Activated CD4-positive, alpha-beta memory T cell treated with anti-CD3 and anti-CD28 coated beads for 36 hours (primary cell): ENCODE measurements at regions of chr9 and their contacts with region 1.

Region 1: GRCh38 chr9:7976167-7976755 is 176.7 kb upstream of the DMAC1 start:
- DNase-seq: peak; percentile 64
- H3K4me3 Mint-ChIP-seq: peak overlapping the region; percentile 26
- H3K27ac Mint-ChIP-seq: peak overlapping the region; percentile 84
- H3K4me1 Mint-ChIP-seq: peaks cover 63% of the 10 kb centered on the region
- H3K27me3 Mint-ChIP-seq: no peaks in the 10 kb centered on the region

Region 2: GRCh38 chr9:6997330-6997729 is 978.9 kb before region 1 on chr9:
- CTCF ChIA-PET with region 1: no interaction called
- POLR2A ChIA-PET with region 1: no interaction called
- intact Hi-C with region 1: no loop called
- DNase-seq: no peak
- H3K4me3 Mint-ChIP-seq: no peak overlapping the region
- H3K27ac Mint-ChIP-seq: no peak overlapping the region
- H3K4me1 Mint-ChIP-seq: no peaks in the 10 kb centered on the region
- H3K27me3 Mint-ChIP-seq: no peaks in the 10 kb centered on the region

Region 3: GRCh38 chr9:7756088-7756487 is 220.2 kb before region 1 on chr9:
- CTCF ChIA-PET with region 1: no interaction called
- POLR2A ChIA-PET with region 1: no interaction called
- intact Hi-C with region 1: loop called (anchors 2 kb)
- DNase-seq: peak; percentile 15
- H3K4me3 Mint-ChIP-seq: no peak overlapping the region
- H3K27ac Mint-ChIP-seq: peak overlapping the region; percentile 50
- H3K4me1 Mint-ChIP-seq: peaks cover 12% of the 10 kb centered on the region
- H3K27me3 Mint-ChIP-seq: no peaks in the 10 kb centered on the region

Region 4: GRCh38 chr9:7879551-7880245 is 96.6 kb before region 1 on chr9:
- CTCF ChIA-PET with region 1: no interaction called
- POLR2A ChIA-PET with region 1: no interaction called
- intact Hi-C with region 1: loop called (anchors 1 kb)
- DNase-seq: peak; percentile 69
- H3K4me3 Mint-ChIP-seq: no peak overlapping the region
- H3K27ac Mint-ChIP-seq: no peak overlapping the region
- H3K4me1 Mint-ChIP-seq: peaks cover 7% of the 10 kb centered on the region
- H3K27me3 Mint-ChIP-seq: peaks cover 2% of the 10 kb centered on the region

Region 5: GRCh38 chr9:7988644-7989280 is 12.5 kb after region 1 on chr9:
- CTCF ChIA-PET with region 1: no interaction called
- POLR2A ChIA-PET with region 1: no interaction called
- intact Hi-C with region 1: loop called (anchors 1 kb)
- DNase-seq: no peak
- H3K4me3 Mint-ChIP-seq: no peak overlapping the region
- H3K27ac Mint-ChIP-seq: no peak overlapping the region
- H3K4me1 Mint-ChIP-seq: peaks cover 6% of the 10 kb centered on the region
- H3K27me3 Mint-ChIP-seq: peaks cover 3% of the 10 kb centered on the region

Region 6: GRCh38 chr9:8188720-8189407 is 212.6 kb after region 1 on chr9:
- CTCF ChIA-PET with region 1: no interaction called
- POLR2A ChIA-PET with region 1: interaction called, 3 read pairs
- intact Hi-C with region 1: loop called (anchors 2 kb)
- DNase-seq: peak; percentile 51
- H3K4me3 Mint-ChIP-seq: no peak overlapping the region
- H3K27ac Mint-ChIP-seq: no peak overlapping the region
- H3K4me1 Mint-ChIP-seq: peaks cover 8% of the 10 kb centered on the region
- H3K27me3 Mint-ChIP-seq: peaks cover 6% of the 10 kb centered on the region